ENCODE measurements at regions of chr4 and their contacts with region 1.

Region 1: DNA sequence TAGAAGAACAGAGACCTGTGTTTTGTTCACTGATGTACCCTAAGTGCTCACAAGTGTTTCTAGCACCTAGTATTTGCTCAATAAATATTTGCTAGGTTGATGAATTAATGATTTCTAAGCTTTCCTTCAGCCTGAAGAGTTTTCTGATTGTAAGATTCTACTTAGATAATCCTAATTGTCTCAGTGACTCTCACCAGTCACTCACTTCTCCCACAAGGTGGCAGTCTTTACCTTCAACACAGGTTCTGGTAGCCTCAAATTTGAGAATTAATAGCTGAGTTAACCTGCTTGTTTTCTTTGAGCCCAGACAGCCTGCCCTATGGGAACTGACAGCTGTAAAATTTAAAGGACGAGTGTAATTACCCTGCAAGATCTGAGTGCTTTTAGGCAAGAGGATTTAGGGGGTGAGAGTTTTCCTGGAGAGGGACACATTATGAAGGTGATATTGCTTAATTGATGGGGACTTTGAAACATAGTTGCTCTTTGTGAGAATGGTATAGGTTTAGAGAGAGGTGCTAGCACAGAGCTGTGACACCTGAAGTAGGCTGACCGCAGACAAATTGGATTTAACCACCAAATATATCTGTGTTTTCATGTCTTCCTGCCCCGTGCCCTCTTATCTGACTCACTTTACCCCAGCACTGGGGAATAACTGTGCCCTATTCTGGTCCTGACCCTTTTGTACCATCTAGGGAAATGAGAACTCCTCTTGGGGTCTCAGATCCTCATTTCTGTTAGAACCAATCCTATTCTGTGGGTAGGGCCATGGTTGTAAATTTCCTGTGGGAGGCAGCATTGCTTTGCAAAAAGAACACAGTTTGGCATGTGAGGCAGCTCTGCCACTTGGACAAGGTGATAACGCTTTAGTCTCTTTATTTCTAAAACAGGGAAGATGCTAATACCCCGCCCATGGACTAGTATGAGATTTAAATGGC is 27.7 kb downstream of the CD38 start:
- DNase-seq: peak; percentile 47 to 71 (median 65)
- H3K4me3 ChIP-seq: no peak overlapping the region
- H3K4me3 Mint-ChIP-seq: no peak overlapping the region
- H3K27ac ChIP-seq: no peak overlapping the region
- H3K27ac Mint-ChIP-seq: peak overlapping the region in 2 of 7 donors; percentile 13 to 17
- H3K4me1 ChIP-seq: peaks cover 30% of the 10 kb centered on the region in 2 donors
- H3K4me1 Mint-ChIP-seq: peaks cover 46% of the 10 kb centered on the region
- H3K27me3 ChIP-seq: no peaks in the 10 kb centered on the region
- H3K27me3 Mint-ChIP-seq: peaks cover 0 to 3% (median 0%) of the 10 kb centered on the region in 3 donors
- CTCF ChIP-seq: peak; percentile 84

Region 2: DNA sequence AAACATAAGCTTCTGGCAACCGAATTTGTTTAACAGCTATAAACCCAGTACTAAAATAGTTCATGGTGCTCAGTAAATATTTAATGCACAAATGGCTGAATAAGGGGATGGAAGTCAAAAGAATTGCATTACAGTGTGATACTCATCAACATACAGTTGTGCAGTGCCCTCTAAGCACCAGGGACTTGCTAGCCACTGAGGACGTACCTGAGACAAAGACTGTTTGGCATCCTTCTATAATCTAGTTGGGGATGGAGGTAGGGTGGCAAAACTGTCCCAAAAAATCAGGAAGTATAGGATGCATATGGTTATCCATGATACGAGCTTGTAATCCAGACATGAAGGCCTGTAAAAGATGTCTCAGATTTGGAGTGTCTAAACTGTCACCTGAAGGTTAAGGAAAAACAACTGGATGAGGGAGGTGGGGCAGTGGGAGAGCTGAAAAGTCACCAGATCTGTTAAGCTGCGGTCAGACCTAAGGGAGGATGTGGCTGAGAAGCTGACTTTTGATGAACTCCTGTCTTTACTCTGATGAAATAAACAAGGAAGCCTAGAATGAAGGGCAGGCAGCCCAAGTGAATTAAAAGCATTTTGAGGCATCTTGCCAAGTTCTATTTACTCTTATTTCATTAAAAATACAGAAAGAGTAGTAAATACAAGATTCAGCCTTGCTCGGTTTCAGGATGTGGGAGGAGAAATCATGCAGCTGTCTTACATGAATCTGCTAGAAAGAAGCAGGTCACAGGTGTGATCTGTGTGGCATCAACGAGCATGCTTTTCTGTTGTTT is 39.7 kb before region 1 on chr4:
- intact Hi-C with region 1: no loop called
- DNase-seq: no peak
- H3K4me3 ChIP-seq: no peak overlapping the region
- H3K4me3 Mint-ChIP-seq: peak overlapping the region in 1 of 2 donors; percentile 37
- H3K27ac ChIP-seq: no peak overlapping the region
- H3K27ac Mint-ChIP-seq: no peak overlapping the region
- H3K4me1 ChIP-seq: peaks cover 5% of the 10 kb centered on the region in 2 donors
- H3K4me1 Mint-ChIP-seq: peaks cover 15% of the 10 kb centered on the region
- H3K27me3 ChIP-seq: no peaks in the 10 kb centered on the region
- H3K27me3 Mint-ChIP-seq: peaks cover 0 to 4% (median 1%) of the 10 kb centered on the region in 3 donors
- CTCF ChIP-seq: no peak

Region 3: GRCh38 chr4:16001484-16001858 is 195.6 kb after region 1 on chr4:
- intact Hi-C with region 1: loop called (anchors 5 to 10 kb)
- DNase-seq: peak; percentile 73 to 82 (median 75)
- H3K4me3 ChIP-seq: no peak overlapping the region
- H3K4me3 Mint-ChIP-seq: no peak overlapping the region
- H3K27ac ChIP-seq: no peak overlapping the region
- H3K27ac Mint-ChIP-seq: no peak overlapping the region
- H3K4me1 ChIP-seq: peaks cover 0 to 6% of the 10 kb centered on the region in 2 donors
- H3K4me1 Mint-ChIP-seq: no peaks in the 10 kb centered on the region
- H3K27me3 ChIP-seq: no peaks in the 10 kb centered on the region
- H3K27me3 Mint-ChIP-seq: peaks cover 0 to 2% (median 0%) of the 10 kb centered on the region in 3 donors
- CTCF ChIP-seq: peak; percentile 85